Activated T-helper 2 cell treated with anti-CD3 and anti-CD28 coated beads, Interferon-gamma antibody, Interleukin-2, Interleukin-4, amounts not matched to agents 10 μg/mL and 5 μg/mL and 100 μg/mL, durations not matched to agents 14 hours and 24 hours and 36 hours (primary cell): ENCODE measurements at regions of chr4 and their contacts with region 1.

Region 1: DNA sequence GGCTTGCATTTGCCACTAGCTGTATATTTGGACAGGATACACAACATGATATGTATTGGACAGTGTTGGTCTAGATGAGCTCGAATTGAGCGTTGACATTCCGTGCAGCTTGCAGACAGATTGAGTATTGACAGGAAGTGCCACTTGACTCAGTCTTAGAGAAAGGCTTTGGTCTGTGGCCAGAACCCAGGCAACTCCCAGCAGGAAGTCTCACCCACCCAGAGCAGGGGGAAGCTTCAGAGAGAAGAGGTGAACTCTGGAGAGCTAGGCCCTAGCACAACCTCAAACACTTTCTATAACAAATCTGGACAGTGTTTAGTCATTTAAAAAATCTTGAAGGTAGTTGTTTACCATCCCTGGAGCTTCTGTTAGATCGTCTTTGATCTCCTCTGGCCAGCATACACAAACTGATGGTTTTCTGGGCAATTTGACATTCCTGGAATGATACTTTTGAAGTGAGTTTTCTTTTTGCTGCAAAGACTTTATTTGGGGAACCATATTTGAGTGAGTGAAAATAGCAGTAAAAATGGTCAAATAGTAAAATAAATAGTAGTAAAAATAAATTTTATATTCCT is 280.4 kb downstream of the FBXW7 start:
- DNase-seq: peak; percentile 68
- H3K4me3 Mint-ChIP-seq: peak overlapping the region; percentile 3
- H3K27ac Mint-ChIP-seq: no peak overlapping the region
- H3K4me1 Mint-ChIP-seq: peaks cover 22% of the 10 kb centered on the region
- H3K27me3 Mint-ChIP-seq: no peaks in the 10 kb centered on the region

Region 2: GRCh38 chr4:151882072-151882803 is 373.3 kb before region 1 on chr4:
- intact Hi-C with region 1: loop called (anchors 2 kb)
- DNase-seq: no peak
- H3K4me3 Mint-ChIP-seq: no peak overlapping the region
- H3K27ac Mint-ChIP-seq: peak overlapping the region; percentile 46
- H3K4me1 Mint-ChIP-seq: peaks cover 22% of the 10 kb centered on the region
- H3K27me3 Mint-ChIP-seq: no peaks in the 10 kb centered on the region

Region 3: GRCh38 chr4:152106113-152106763 is 149.3 kb before region 1 on chr4:
- intact Hi-C with region 1: loop called (anchors 10 kb)
- DNase-seq: no peak
- H3K4me3 Mint-ChIP-seq: no peak overlapping the region
- H3K27ac Mint-ChIP-seq: no peak overlapping the region
- H3K4me1 Mint-ChIP-seq: peaks cover 34% of the 10 kb centered on the region
- H3K27me3 Mint-ChIP-seq: no peaks in the 10 kb centered on the region

Region 4: DNA sequence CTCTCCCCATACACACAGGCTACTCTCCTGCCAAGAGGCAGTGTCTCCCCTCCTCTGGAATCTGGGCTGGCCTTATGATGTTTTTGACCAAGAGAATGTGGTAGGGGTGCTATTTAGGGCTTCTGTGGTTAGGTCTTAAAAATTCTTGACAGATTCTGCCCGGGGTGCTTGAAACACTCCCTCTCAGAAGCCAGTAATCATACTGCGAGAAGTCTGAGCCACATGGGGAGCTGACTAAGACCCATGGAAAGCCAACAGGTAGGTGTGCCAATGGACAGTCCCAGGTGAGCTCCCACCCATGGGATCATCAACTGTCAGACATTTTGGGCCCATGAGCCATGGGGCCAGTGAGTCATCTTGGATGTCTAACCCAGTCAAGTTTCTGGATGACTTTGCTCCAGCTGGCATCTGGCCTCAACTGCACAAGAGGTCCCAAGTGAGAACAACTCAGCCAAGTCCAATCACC is 35.3 kb before region 1 on chr4:
- intact Hi-C with region 1: loop called (anchors 2 kb)
- DNase-seq: no peak
- H3K4me3 Mint-ChIP-seq: no peak overlapping the region
- H3K27ac Mint-ChIP-seq: no peak overlapping the region
- H3K4me1 Mint-ChIP-seq: peaks cover 25% of the 10 kb centered on the region
- H3K27me3 Mint-ChIP-seq: no peaks in the 10 kb centered on the region

Region 5: GRCh38 chr4:152369902-152370295 is 114.4 kb after region 1 on chr4:
- intact Hi-C with region 1: loop called (anchors 10 kb)
- DNase-seq: no peak
- H3K4me3 Mint-ChIP-seq: no peak overlapping the region
- H3K27ac Mint-ChIP-seq: no peak overlapping the region
- H3K4me1 Mint-ChIP-seq: peaks cover 16% of the 10 kb centered on the region
- H3K27me3 Mint-ChIP-seq: no peaks in the 10 kb centered on the region

Region 6: GRCh38 chr4:152679414-152680281 is 424.1 kb after region 1 on chr4 and contains the start of gene TMEM154:
- intact Hi-C with region 1: loop called (anchors 5 kb)
- DNase-seq: peak; percentile 71
- H3K4me3 Mint-ChIP-seq: peak within 1 kb of the TSS; percentile 87
- H3K27ac Mint-ChIP-seq: peak within 1 kb of the TSS; percentile 71
- H3K4me1 Mint-ChIP-seq: peaks cover 55% of the 10 kb centered on the region
- H3K27me3 Mint-ChIP-seq: no peaks in the 10 kb centered on the region
- total RNA-seq, gene TMEM154: 10.3 and 12.1 TPM in 2 replicates